Vagina (tissue), 2 donors: ENCODE measurements at regions of chr4 and their contacts with region 1.

Region 1: GRCh38 chr4:138487670-138488069 is 245.5 kb upstream of the SLC7A11 start:
- DNase-seq: no peak
- H3K4me3 ChIP-seq: no peak overlapping the region
- H3K27ac ChIP-seq: no peak overlapping the region
- H3K4me1 ChIP-seq: no peaks in the 10 kb centered on the region
- H3K27me3 ChIP-seq: no peaks in the 10 kb centered on the region
- CTCF ChIP-seq: no peak
- POLR2A ChIP-seq: no peak

Region 2: DNA sequence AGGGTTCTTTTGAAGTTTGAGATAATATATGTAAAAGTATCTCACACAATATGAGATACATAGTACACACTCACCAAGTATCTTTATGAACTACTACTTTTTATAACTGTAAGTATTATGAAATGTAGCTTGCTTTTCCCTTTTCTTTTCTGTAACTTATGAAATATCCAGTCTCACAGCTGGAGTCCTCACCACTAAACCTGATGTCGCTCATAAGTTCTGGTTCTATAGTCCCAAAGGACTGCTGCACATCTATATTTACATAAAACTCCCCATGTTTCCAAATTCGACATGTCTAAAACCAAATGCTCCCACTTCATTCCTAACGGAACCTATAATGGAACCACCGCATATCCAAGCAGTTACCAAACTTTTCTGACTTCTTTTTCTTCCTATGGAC is 59.1 kb before region 1 on chr4:
- intact Hi-C with region 1: loop called (anchors 10 kb)
- DNase-seq: no peak
- H3K4me3 ChIP-seq: no peak overlapping the region
- H3K27ac ChIP-seq: no peak overlapping the region
- H3K4me1 ChIP-seq: no peaks in the 10 kb centered on the region
- H3K27me3 ChIP-seq: no peaks in the 10 kb centered on the region
- CTCF ChIP-seq: no peak
- POLR2A ChIP-seq: no peak

Region 3: GRCh38 chr4:140395668-140396067 is 1908.0 kb after region 1 on chr4:
- intact Hi-C with region 1: no loop called
- DNase-seq: no peak
- H3K4me3 ChIP-seq: no peak overlapping the region
- H3K27ac ChIP-seq: no peak overlapping the region
- H3K4me1 ChIP-seq: no peaks in the 10 kb centered on the region
- H3K27me3 ChIP-seq: no peaks in the 10 kb centered on the region
- CTCF ChIP-seq: no peak
- POLR2A ChIP-seq: no peak